ENCODE measurements at regions of chr1 and their contacts with region 1.

Region 1: GRCh38 chr1:150186789-150187559 is 37.3 kb downstream of the PLEKHO1 start:
- DNase-seq: no peak
- H3K4me3 ChIP-seq: no peak overlapping the region
- H3K27ac ChIP-seq: peak overlapping the region; percentile 0
- H3K27me3 ChIP-seq: no peaks in the 10 kb centered on the region
- CTCF ChIP-seq: peak; percentile 52

Region 2: GRCh38 chr1:149886396-149887195 is 300.4 kb before region 1 on chr1:
- CTCF ChIA-PET with region 1: interaction called, 9 read pairs
- POLR2A ChIA-PET with region 1: interaction called, 15 read pairs
- DNase-seq: peak; percentile 99
- H3K4me3 ChIP-seq: peak overlapping the region; percentile 77
- H3K27ac ChIP-seq: peak overlapping the region; percentile 99
- H3K27me3 ChIP-seq: no peaks in the 10 kb centered on the region
- CTCF ChIP-seq: no peak

Region 3: DNA sequence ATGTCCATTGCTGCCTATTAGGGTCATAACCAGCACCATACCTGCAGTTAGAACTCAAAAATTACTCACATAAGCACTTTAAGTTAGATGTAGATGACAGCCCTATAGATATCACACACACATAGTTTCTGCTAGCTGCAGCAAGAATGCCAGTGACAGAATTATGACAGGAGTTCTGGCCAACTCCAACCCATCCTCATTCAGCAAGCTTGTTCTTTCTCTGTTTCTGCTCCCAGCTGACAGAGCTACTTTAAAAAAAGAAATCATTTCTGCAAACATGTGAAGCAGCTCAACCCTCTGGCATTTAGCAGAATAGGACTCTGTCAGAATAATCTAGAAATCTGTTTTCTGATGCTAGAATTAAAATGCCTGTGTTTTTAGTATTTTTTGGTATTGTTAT is 152.6 kb before region 1 on chr1:
- CTCF ChIA-PET with region 1: interaction called, 10 read pairs
- POLR2A ChIA-PET with region 1: no interaction called
- DNase-seq: no peak
- H3K4me3 ChIP-seq: no peak overlapping the region
- H3K27ac ChIP-seq: no peak overlapping the region
- H3K27me3 ChIP-seq: no peaks in the 10 kb centered on the region
- CTCF ChIP-seq: no peak

Region 4: DNA sequence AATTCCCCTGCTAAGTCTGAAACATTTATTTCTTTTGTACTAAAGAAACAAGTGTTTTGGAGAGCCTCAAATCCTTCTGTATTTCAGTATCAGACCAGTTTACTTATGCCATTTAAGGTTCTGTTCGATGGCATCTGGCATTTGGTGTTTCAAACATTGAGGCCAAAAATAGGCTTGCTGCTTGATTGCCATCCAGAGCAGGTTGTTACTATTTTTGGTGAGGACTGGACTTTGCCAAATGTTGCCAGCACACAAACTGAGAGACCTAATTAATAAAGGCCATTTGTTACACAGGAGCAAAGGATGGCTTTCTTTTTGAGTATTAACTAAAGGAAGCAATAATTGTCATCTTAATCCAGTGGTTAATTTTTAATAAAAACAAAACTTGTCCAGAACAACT is 93.2 kb before region 1 on chr1:
- CTCF ChIA-PET with region 1: interaction called, 13 read pairs
- POLR2A ChIA-PET with region 1: no interaction called
- DNase-seq: no peak
- H3K4me3 ChIP-seq: no peak overlapping the region
- H3K27ac ChIP-seq: no peak overlapping the region
- H3K27me3 ChIP-seq: no peaks in the 10 kb centered on the region
- CTCF ChIP-seq: no peak

Region 5: DNA sequence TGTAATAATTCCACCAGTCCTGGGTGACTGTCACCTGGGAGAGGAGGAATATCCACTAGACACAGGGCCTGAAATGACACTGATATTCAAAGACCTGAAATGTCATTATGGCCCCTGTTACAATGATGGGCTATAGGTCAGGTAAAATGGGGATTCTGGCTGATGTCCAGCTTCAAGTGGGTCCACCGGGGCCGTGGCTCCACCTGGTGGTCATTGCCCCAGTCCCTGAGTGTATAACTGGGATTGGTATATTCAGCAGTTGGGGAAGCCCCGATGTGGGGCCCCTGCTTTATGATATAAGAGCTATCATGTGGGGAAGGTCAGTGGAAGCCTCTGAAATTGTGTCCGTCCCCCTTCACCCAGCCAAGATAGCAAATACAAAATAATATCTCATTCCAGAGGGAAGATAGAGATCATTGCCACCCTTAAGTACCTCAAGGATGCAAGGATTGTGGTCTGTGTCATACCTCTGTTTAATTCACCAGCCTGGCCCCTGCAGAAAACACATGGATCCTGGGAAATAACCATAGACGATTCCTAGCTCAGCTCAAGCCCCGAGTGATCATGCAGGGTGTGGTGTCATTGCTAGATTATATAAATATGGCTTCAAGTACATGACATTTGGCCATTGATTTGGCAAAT is 17.9 kb before region 1 on chr1:
- CTCF ChIA-PET with region 1: interaction called, 39 read pairs
- POLR2A ChIA-PET with region 1: no interaction called
- DNase-seq: no peak
- H3K4me3 ChIP-seq: no peak overlapping the region
- H3K27ac ChIP-seq: no peak overlapping the region
- H3K27me3 ChIP-seq: no peaks in the 10 kb centered on the region
- CTCF ChIP-seq: peak; percentile 89

Region 6: DNA sequence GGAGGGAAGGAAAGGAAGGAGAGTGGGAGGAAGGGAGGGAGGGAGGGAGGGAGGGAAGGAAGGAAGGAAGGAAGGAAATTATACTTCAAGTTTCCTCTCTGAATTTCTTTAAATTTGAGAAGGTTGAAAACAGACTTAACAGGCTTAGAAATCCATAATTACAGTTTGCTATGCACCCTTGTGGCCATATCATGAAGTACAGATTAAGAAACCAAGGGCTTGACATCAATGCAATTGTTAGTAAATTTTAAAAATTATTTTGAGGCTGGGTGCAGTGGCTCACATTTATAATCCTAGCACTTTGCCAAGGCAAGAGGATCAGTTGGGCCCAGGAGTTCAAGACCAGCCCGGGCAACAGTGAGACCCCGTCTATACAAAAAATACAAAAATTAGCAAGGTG is 34.6 kb after region 1 on chr1:
- CTCF ChIA-PET with region 1: interaction called, 15 read pairs
- POLR2A ChIA-PET with region 1: no interaction called
- DNase-seq: no peak
- H3K4me3 ChIP-seq: no peak overlapping the region
- H3K27ac ChIP-seq: no peak overlapping the region
- H3K27me3 ChIP-seq: no peaks in the 10 kb centered on the region
- CTCF ChIP-seq: peak; percentile 63